Endothelial cell of umbilical vein (primary cell): ENCODE measurements at regions of chr2 and their contacts with region 1.

Region 1: GRCh38 chr2:55050133-55050994 is at the start of gene RTN4:
- DNase-seq: peak; percentile 99
- H3K4me3 ChIP-seq: peak within 1 kb of the TSS; percentile 86 to 99 (median 97)
- H3K27ac ChIP-seq: peak within 1 kb of the TSS; percentile 97
- H3K4me1 ChIP-seq: peaks cover 38% of the 10 kb centered on the region
- H3K27me3 ChIP-seq: no peaks in the 10 kb centered on the region
- CTCF ChIP-seq: peak in 1 of 2 donors; percentile 26
- POLR2A ChIP-seq: peak; percentile 94
- total RNA-seq, gene RTN4: 472 and 486 TPM in 2 replicates

Region 2: DNA sequence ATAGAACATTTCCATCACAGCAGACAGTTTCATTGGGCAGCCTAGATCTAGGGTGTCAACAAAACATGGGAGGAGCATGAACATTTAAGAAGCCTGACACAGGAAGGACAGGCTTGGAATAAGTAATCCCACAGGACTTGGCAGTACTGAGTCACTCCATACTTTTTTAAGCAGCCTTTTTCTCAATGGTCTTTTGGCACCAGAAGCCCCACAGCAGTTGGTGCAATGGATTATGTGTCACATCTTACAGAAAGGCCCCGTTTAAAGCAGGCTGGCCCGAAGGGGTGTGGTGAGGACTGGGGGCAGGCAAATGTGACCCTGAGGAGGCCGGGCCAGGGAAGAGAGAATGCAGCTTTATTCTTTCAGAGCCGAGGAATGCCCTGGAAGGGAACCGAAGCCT is 567.6 kb before region 1 on chr2:
- CTCF ChIA-PET with region 1: no interaction called
- POLR2A ChIA-PET with region 1: no interaction called
- dilution Hi-C with region 1: no loop called
- intact Hi-C with region 1: no loop called
- DNase-seq: peak; percentile 47
- H3K4me3 ChIP-seq: no peak overlapping the region
- H3K27ac ChIP-seq: peak overlapping the region; percentile 12
- H3K4me1 ChIP-seq: peaks cover 19% of the 10 kb centered on the region
- H3K27me3 ChIP-seq: no peaks in the 10 kb centered on the region
- CTCF ChIP-seq: no peak
- POLR2A ChIP-seq: no peak

Region 3: GRCh38 chr2:54899576-54900200 is 150.7 kb before region 1 on chr2:
- CTCF ChIA-PET with region 1: interaction called, 41 read pairs
- POLR2A ChIA-PET with region 1: no interaction called
- dilution Hi-C with region 1: no loop called
- intact Hi-C with region 1: loop called (anchors 2 kb)
- DNase-seq: peak; percentile 48
- H3K4me3 ChIP-seq: no peak overlapping the region
- H3K27ac ChIP-seq: no peak overlapping the region
- H3K4me1 ChIP-seq: peaks cover 10% of the 10 kb centered on the region
- H3K27me3 ChIP-seq: peaks cover 5 to 6% of the 10 kb centered on the region in 2 experiments
- CTCF ChIP-seq: peak; percentile 31 to 34
- POLR2A ChIP-seq: no peak

Region 4: DNA sequence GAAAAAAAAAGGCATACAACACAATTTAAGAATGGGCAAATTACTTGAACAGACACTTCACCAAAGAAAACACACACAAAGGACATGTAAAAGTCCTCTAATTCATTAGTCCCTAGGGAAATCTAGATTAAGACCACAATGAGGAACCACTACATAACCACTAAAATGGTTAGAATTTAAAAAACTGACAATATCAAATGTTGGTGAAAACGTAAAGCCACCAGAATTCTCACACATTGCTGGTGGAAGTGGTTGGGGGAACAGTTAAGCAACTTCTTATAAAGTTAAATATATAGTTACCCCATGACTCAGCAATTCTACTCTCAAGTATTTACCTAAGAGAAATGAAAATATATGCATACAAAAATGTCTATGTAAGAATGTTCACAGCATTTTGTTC is 11.9 kb before region 1 on chr2:
- CTCF ChIA-PET with region 1: interaction called, 13 read pairs
- POLR2A ChIA-PET with region 1: interaction called, 3 read pairs
- dilution Hi-C with region 1: no loop called
- intact Hi-C with region 1: loop called (anchors 1 kb)
- DNase-seq: no peak
- H3K4me3 ChIP-seq: no peak overlapping the region
- H3K27ac ChIP-seq: no peak overlapping the region
- H3K4me1 ChIP-seq: peaks cover 16% of the 10 kb centered on the region
- H3K27me3 ChIP-seq: no peaks in the 10 kb centered on the region
- CTCF ChIP-seq: no peak
- POLR2A ChIP-seq: no peak

Region 5: GRCh38 chr2:55099878-55100820 is 49.8 kb after region 1 on chr2:
- CTCF ChIA-PET with region 1: interaction called, 18 read pairs
- POLR2A ChIA-PET with region 1: interaction called, 5 read pairs
- dilution Hi-C with region 1: no loop called
- intact Hi-C with region 1: loop called (anchors 2 kb)
- DNase-seq: peak; percentile 87
- H3K4me3 ChIP-seq: peak overlapping the region in 1 of 3 experiments; percentile 24
- H3K27ac ChIP-seq: peak overlapping the region; percentile 97
- H3K4me1 ChIP-seq: peaks cover 68% of the 10 kb centered on the region
- H3K27me3 ChIP-seq: no peaks in the 10 kb centered on the region
- CTCF ChIP-seq: no peak
- POLR2A ChIP-seq: peak; percentile 48

Region 6: GRCh38 chr2:55168221-55169154 is 118.1 kb after region 1 on chr2:
- CTCF ChIA-PET with region 1: interaction called, 129 read pairs
- POLR2A ChIA-PET with region 1: interaction called, 9 read pairs
- dilution Hi-C with region 1: no loop called
- intact Hi-C with region 1: loop called (anchors 1 kb)
- DNase-seq: peak; percentile 83
- H3K4me3 ChIP-seq: no peak overlapping the region
- H3K27ac ChIP-seq: no peak overlapping the region
- H3K4me1 ChIP-seq: peaks cover 28% of the 10 kb centered on the region
- H3K27me3 ChIP-seq: no peaks in the 10 kb centered on the region
- CTCF ChIP-seq: peak; percentile 64 to 67
- POLR2A ChIP-seq: no peak